Posterior vena cava (tissue), 2 donors: ENCODE measurements at regions of chr20 and their contacts with region 1.

Region 1: GRCh38 chr20:63537525-63538203 is 488 bp upstream of the PTK6 start:
- DNase-seq: peak; percentile 96

Region 2: GRCh38 chr20:63501818-63502670 is 35.6 kb before region 1 on chr20:
- intact Hi-C with region 1: no loop called
- DNase-seq: peak; percentile 70

Region 3: GRCh38 chr20:63602321-63602720 is 64.7 kb after region 1 on chr20:
- intact Hi-C with region 1: no loop called
- DNase-seq: no peak

Region 4: DNA sequence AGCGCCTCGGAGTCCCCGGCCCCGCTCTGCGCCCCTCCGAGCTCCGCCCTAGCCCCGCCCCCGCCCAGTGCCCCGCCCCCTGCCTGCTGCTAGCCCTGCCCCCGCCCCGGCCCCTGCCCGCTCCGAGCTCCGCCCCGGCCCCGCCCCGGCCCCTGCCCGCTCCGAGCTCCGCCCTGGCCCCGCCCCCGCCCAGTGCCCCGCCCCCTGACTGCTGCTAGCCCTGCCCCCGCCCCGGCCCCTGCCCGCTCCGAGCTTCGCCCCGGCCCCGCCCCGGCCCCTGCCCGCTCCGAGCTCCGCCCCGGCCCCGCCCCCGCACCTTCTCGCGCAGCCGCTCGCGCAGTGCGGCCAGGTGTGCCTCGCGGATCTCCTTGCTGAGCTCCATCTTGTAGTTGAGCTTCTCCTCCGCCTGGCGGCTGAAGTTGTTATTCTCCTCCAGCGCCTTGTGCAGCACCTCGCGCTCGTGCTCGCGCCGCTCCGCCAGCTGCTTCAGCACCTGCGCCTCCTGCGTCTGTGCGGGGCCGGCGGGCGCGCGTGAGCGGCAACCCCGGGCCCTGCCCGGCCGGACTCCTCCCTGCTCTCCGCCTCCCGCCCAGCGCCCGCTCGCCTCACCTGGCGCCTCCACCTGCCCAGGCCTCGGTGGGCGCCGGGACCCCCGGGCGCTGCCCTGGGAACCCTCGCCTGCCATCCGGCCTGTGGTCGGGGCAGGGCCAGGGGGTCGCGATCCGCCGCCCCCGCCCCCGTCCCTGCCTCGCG is 104.3 kb after region 1 on chr20:
- intact Hi-C with region 1: loop called in 1 of 2 experiments (anchors 10 kb)
- DNase-seq: peak; percentile 96